Caco-2 (cell line): ENCODE measurements at regions of chr9 and their contacts with region 1.

Region 1: GRCh38 chr9:112396416-112396815 is 16.5 kb downstream of the HSDL2 start:
- DNase-seq: no peak
- H3K4me3 ChIP-seq: no peak overlapping the region
- H3K4me3 Mint-ChIP-seq: no peak overlapping the region
- H3K27ac Mint-ChIP-seq: peak overlapping the region; percentile 12
- H3K4me1 ChIP-seq: peaks cover 16% of the 10 kb centered on the region
- H3K4me1 Mint-ChIP-seq: peaks cover 38% of the 10 kb centered on the region
- H3K27me3 ChIP-seq: no peaks in the 10 kb centered on the region
- H3K27me3 Mint-ChIP-seq: no peaks in the 10 kb centered on the region
- CTCF ChIP-seq: no peak

Region 2: GRCh38 chr9:112379177-112380101 is 17.0 kb before region 1 on chr9:
- CTCF ChIA-PET with region 1: no interaction called
- POLR2A ChIA-PET with region 1: no interaction called
- intact Hi-C with region 1: loop called (anchors 1 kb)
- DNase-seq: peak; percentile 99
- H3K4me3 ChIP-seq: peak overlapping the region; percentile 81
- H3K4me3 Mint-ChIP-seq: peak overlapping the region; percentile 99
- H3K27ac Mint-ChIP-seq: peak overlapping the region; percentile 98
- H3K4me1 ChIP-seq: peaks cover 44% of the 10 kb centered on the region
- H3K4me1 Mint-ChIP-seq: peaks cover 35% of the 10 kb centered on the region
- H3K27me3 ChIP-seq: no peaks in the 10 kb centered on the region
- H3K27me3 Mint-ChIP-seq: no peaks in the 10 kb centered on the region
- CTCF ChIP-seq: peak in 1 of 2 experiments; percentile 3